HepG2 (cell line): ENCODE measurements at regions of chr2 and their contacts with region 1.

Region 1: DNA sequence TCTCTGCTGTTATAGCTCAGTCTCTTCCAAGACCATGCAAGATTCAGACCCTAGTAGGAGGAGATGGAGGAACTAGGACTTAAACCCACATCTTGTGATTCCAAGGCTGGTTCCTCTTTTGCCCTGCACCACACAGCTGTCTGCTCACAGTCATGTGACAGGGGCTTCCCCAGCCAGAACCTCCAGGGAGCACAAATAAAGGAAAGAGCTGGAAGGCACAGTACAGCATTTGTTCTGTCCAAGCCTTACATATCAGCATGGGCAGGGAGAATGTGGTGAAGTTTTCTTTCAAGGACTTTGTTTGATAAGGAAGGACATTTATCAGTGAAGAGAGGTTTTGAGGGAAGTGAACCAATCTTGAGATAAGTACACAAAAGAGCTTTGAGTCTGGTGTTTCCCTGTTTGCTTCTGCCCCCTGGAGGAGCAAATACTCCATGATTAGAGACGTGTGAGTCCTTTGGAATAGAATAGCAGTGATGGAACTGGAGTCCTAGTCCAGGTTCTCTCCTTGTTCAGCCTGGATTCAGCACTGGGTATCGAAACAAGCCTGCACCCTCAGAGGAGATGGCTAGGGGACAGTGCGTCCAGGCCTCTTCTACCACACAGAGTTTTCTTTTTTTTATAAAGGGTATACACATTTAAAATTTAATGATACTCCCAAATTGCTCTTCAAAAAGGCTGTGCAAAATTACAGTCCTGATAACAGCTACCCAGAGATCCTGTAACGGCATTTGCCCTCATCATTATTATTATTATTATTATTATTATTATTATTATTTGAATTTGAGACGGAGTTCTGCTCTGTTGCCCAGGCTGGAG is 24.6 kb upstream of the CASP10 start:
- DNase-seq: peak; percentile 91
- ATAC-seq: peak; percentile 95
- H3K4me3 ChIP-seq: no peak overlapping the region
- H3K27ac ChIP-seq: peak overlapping the region; percentile 17
- H3K4me1 ChIP-seq: peaks cover 10% of the 10 kb centered on the region
- H3K27me3 ChIP-seq: no peaks in the 10 kb centered on the region
- CTCF ChIP-seq: peak; percentile 92
- EP300 ChIP-seq: no peak
- POLR2A ChIP-seq: no peak
- RAD21 ChIP-seq: peak; percentile 89

Region 2: DNA sequence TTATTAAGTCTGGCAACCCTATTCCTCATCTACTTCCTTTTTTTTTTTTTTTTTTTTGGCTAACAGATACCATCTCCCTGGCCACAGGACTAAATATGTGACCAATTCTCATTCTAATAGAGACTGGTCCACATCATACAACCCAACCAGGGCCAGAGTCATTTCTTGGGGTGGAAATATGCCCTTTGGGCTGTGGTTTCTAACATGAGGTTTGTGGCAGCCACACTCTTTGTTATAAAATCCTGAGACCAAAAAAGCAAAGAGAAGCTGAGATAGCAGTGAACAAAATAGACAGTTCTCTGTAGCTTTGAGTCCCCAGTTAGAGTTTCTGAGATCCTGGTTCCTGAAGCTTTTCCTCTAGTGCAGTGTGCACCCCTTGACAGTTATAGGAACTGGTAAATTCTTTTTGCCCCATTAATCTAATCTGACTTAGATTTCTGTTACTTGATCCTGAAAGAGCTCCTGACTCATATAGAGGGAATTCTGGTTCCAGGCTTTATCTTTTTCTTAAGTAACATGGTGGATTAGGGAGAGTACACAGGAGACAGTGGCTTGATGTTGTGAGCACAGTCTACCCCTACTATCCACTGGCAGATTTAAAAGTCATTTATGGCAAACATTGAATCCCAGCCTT is 1116.1 kb before region 1 on chr2:
- CTCF ChIA-PET with region 1: no interaction called
- POLR2A ChIA-PET with region 1: no interaction called
- in situ Hi-C with region 1: no loop called
- intact Hi-C with region 1: no loop called
- DNase-seq: no peak
- ATAC-seq: no peak
- H3K4me3 ChIP-seq: no peak overlapping the region
- H3K27ac ChIP-seq: no peak overlapping the region
- H3K4me1 ChIP-seq: no peaks in the 10 kb centered on the region
- H3K27me3 ChIP-seq: no peaks in the 10 kb centered on the region; a peak in 1 of 5 replicates
- CTCF ChIP-seq: no peak
- EP300 ChIP-seq: no peak
- POLR2A ChIP-seq: no peak
- RAD21 ChIP-seq: no peak

Region 3: GRCh38 chr2:200795044-200795443 is 363.3 kb before region 1 on chr2:
- CTCF ChIA-PET with region 1: no interaction called
- POLR2A ChIA-PET with region 1: no interaction called
- in situ Hi-C with region 1: no loop called
- intact Hi-C with region 1: no loop called
- DNase-seq: peak; percentile 25
- ATAC-seq: peak; percentile 71
- H3K4me3 ChIP-seq: no peak overlapping the region
- H3K27ac ChIP-seq: no peak overlapping the region
- H3K4me1 ChIP-seq: peaks cover 29% of the 10 kb centered on the region
- H3K27me3 ChIP-seq: no peaks in the 10 kb centered on the region
- CTCF ChIP-seq: peak; percentile 77
- EP300 ChIP-seq: no peak
- POLR2A ChIP-seq: no peak
- RAD21 ChIP-seq: peak; percentile 40; the same call in 1 of the 2 replicates

Region 4: DNA sequence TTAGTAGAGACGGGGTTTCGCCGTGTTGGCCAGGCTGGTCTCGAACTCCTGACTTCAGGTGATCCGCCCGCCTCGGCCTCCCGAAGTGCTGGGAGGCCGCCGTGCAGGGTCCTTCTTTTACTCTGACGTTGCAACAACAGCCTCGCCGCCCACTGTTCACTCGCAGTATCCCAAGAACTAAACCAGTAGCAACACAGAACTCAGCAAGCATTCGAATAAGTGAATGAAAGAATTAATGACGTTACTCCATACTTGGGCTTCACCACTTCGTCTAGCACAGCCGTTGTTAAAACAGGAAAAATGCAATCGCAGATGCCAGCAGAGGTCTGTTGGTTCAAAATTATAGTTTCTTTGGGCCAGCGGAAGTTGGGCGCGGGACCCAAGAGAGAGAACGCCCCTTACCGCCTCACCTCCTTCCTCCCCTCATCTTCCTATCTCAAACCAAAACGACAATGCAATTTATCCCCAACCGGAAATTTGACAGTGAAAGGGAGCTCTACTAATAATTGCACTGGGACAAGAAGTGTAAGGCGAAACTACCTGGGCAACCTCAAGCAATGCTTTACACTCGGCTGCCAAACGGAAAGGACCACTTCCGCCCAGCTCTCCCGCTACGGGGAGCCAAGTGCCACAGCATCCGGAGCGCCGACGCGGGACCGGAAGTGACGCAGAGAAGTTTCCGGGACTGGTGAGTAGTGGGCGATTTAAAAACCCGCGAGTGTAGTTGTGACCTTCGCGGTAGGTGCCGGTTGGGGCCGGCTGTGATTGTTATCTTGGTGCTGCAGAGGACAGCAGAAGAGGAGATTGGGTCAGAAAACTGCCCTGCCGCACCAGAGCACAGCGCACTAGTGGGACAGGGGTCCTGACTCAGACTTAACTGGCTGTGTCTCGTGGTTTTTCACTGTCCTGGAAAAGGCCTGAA is 269.4 kb before region 1 on chr2 and contains the starts of genes NIF3L1 and PPIL3:
- CTCF ChIA-PET with region 1: no interaction called
- POLR2A ChIA-PET with region 1: interaction called, 10 read pairs
- in situ Hi-C with region 1: no loop called
- intact Hi-C with region 1: no loop called
- DNase-seq: peak; percentile 99
- ATAC-seq: peak; percentile 90
- H3K4me3 ChIP-seq: peak within 1 kb of the TSS; percentile 79 to 92 (median 90)
- H3K27ac ChIP-seq: peak within 1 kb of the TSS; percentile 97
- H3K4me1 ChIP-seq: peaks cover 34% of the 10 kb centered on the region
- H3K27me3 ChIP-seq: no peaks in the 10 kb centered on the region; a peak in 2 of 5 replicates
- CTCF ChIP-seq: no peak; the same call in none of the 2 replicates
- EP300 ChIP-seq: peak; percentile 30 to 68; a peak in 2 of 4 replicates
- POLR2A ChIP-seq: peak; percentile 69 to 95
- RAD21 ChIP-seq: 0 out of 2 replicates have a peak, but pooled peaks have one; percentile 17
- total RNA-seq, gene NIF3L1: 67.9 and 98.5 TPM in 2 replicates
- total RNA-seq, gene PPIL3: 98.7 and 126 TPM in 2 replicates

Region 5: GRCh38 chr2:200901459-200902072 is 256.8 kb before region 1 on chr2:
- CTCF ChIA-PET with region 1: interaction called, 9 read pairs
- POLR2A ChIA-PET with region 1: no interaction called
- in situ Hi-C with region 1: no loop called
- intact Hi-C with region 1: loop called (anchors 1 kb)
- DNase-seq: peak; percentile 94
- ATAC-seq: peak; percentile 97
- H3K4me3 ChIP-seq: no peak overlapping the region
- H3K27ac ChIP-seq: no peak overlapping the region
- H3K4me1 ChIP-seq: no peaks in the 10 kb centered on the region
- H3K27me3 ChIP-seq: no peaks in the 10 kb centered on the region
- CTCF ChIP-seq: peak; percentile 92
- EP300 ChIP-seq: no peak
- POLR2A ChIP-seq: no peak
- RAD21 ChIP-seq: peak; percentile 87

Region 6: GRCh38 chr2:201176081-201176481 is 17.8 kb after region 1 on chr2:
- CTCF ChIA-PET with region 1: interaction called, 3 read pairs
- POLR2A ChIA-PET with region 1: interaction called, 4 read pairs
- in situ Hi-C with region 1: no loop called
- intact Hi-C with region 1: loop called (anchors 2 kb)
- DNase-seq: peak; percentile 21
- ATAC-seq: no peak
- H3K4me3 ChIP-seq: no peak overlapping the region; a peak in 1 of 6 replicates
- H3K27ac ChIP-seq: no peak overlapping the region
- H3K4me1 ChIP-seq: peaks cover 33% of the 10 kb centered on the region
- H3K27me3 ChIP-seq: no peaks in the 10 kb centered on the region
- CTCF ChIP-seq: no peak
- EP300 ChIP-seq: no peak
- POLR2A ChIP-seq: no peak
- RAD21 ChIP-seq: no peak